Brain microvascular endothelial cell (primary cell): ENCODE measurements at regions of chr7 and their contacts with region 1.

Region 1: DNA sequence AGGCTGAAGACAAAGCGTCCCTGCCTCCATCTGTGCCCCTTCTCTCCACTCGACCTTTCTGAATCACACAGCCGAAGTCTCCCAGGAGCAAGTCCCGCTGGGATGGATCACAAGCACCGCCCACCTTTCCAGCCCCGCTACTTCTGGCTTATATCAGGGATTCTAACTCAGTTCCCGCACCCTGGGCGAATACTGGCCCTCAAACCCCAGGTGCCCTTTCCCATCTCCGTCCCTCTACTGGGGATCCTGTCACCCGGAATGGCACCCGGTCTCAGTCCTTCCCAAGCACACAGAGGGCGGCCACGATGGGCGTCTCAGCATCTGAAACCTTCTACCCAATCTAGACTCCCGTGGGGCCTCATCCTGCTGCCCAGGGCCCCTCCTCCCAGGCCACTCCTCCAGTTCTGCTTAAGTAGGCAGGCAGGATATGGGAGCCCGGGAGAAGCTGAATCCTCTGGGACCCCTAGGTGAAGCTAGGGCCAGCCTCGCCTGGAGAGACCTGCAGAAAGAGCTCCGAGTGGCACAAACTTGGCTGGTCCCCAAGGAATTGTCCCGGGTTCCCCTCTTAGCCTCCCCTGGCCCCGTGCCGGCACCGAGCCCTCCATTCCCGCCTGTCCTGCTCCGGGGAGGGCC is 768 bp downstream of the KCP start:
- DNase-seq: peak; percentile 32
- H3K4me3 ChIP-seq: peak overlapping the region; percentile 56
- H3K27ac ChIP-seq: no peak overlapping the region
- H3K27me3 ChIP-seq: peaks cover 19% of the 10 kb centered on the region
- CTCF ChIP-seq: no peak

Region 2: DNA sequence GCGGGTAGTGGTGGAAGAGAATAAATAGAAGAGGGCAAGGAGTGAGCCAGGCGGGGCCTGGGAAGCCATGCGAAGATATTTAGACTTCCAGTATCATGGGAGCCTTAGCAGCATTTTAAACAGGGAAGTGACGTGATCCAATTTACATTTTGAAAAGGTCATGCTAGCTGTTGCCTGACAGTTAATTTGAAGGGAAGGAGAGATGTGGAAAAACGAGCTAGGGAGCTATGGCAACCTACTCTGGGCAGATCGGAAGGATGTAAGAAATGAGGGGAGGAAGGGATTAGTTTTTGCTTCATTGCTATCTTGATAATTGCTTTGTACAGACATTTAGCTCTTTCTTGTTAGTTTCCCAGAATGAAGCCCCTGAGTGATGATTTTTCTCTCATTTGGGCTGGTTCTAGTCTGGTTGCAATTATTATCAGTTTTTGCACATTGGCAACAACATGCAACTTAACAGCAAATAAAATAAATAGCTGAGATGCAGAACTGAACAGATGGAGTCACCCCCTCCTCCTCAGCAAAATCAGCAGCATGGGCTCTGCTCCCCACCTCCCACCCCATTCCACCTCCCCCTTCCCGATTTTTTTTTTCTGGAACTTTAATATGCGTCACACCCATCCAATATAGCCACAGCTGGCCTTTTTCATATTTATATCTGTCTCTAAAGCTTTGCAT is 183.5 kb before region 1 on chr7:
- in situ Hi-C with region 1: no loop called
- DNase-seq: no peak
- H3K4me3 ChIP-seq: no peak overlapping the region
- H3K27ac ChIP-seq: no peak overlapping the region
- H3K27me3 ChIP-seq: peaks cover 6% of the 10 kb centered on the region
- CTCF ChIP-seq: no peak

Region 3: DNA sequence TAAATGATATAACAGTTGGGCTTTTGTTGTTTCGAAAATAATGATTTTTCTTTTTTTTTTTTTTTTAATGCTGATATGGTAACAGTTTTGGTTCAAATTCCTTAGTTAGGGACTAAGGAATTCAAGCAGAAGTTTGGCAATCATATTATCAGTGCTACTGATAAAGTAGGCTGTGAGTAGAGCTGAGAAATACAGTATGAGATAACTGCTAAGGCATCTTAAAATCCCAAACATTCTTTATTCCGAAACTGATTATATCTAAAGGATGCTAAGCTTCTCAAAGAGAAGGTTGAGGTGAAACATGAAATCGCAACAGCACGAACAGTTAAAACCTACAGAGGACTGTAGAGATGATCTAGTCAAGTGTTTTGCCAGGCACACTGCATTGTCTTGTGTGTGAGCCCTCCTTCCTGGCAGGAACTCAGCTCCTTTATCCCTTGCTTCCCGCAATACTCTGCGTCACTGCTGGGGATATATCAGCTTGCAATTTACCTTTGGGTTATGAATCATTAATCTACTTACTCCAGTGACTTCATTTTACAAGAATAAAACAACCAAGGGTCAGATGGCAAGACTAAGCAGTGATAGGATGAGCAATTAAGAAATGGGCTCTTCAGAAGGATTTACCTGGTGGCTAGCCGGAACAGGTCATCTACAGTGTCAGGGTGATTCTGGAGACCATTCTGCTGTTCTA is 64.6 kb after region 1 on chr7:
- in situ Hi-C with region 1: loop called (anchors 10 kb)
- DNase-seq: peak; percentile 44
- H3K4me3 ChIP-seq: no peak overlapping the region
- H3K27ac ChIP-seq: no peak overlapping the region
- H3K27me3 ChIP-seq: no peaks in the 10 kb centered on the region
- CTCF ChIP-seq: no peak